Left cardiac atrium (tissue), 4 donors: ENCODE measurements at regions of chr12 and their contacts with region 1.

Region 1: DNA sequence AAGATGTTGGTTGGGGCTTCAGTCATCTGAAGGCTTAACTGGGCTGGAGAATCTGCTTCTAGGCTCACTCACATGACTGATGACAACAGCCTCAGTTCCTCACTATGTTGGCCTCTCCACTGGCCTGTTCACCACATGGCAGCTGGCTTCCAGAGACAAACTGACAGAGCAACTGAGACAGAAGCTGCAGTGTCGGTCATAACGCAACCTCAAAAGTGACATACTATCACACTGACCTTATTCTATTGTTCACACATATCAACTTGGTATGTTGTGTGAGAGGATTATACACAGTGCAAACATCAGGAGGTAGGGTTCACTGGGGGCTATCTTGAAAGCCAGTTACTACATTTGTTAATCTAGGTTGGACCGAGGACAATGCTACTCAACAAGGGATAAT is 92.9 kb downstream of the PAWR start:
- DNase-seq: no peak
- ATAC-seq: no peak

Region 2: DNA sequence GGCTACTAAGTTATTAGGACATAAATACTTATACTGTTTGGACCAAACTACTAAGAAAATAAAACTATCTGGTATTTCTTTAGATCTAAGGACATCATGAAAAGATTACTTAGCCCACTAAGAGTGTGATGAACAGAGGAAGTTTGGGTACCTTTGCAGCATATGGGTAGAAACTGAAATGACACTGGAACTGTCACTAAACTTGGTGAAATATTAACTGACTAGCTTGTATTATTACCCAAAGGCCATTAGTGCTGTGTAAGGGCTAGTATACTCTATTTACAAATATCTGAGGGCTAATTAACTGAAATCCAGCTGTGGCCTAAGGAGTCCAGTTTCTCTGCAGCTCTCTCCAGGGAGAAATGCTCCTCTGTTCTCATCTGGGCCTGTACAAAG is 47.3 kb after region 1 on chr12:
- intact Hi-C with region 1: loop called in 1 of 2 experiments (anchors 10 kb)
- DNase-seq: no peak
- ATAC-seq: no peak